Activated naive CD4-positive, alpha-beta T cell treated with anti-CD3 and anti-CD28 coated beads, Interleukin-2, amount 10 ng/mL, durations not matched to agents 7 days and 5 days (primary cell): ENCODE measurements at regions of chr22 and their contacts with region 1.

Region 1: DNA sequence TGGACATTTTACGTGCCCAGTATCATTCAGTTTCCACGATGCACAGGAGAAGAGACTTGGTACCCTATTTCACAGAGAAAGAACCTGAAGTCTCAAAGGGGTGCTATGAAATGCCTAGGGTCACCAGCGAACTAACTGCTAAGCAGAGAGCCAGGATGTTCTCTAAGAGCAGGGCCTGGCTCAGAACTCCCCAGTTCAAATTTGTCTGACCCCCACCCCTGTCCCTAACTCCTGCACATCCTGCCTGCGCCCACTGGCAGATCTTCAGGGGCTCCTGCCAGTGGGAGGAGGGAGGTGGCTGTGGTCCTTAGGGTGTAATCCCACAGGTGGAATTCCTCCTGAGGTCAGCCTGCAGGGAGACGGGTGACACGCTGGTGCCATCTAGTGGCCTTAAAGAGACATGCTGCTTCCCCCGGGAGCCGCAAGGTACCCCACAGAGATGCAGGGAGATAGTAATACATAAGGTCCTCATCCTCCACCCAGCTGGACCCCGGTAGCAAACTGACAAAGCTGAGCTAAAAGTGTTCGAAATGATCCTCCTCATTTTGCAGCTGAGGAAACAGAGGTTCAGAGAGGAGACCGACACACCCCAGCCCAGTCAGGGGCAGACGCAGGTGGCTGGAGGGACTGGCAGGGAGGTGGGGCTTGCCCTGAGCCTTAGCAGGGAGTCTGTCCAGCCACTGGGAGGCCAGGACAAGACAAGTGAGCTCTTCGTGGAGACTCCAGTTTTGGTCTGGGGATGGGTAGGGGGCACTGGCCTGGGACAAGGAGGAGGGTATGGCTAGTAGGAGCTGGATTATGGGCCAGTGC is 34.1 kb downstream of the MB start:
- DNase-seq: peak; percentile 64
- H3K4me3 Mint-ChIP-seq: no peak overlapping the region
- H3K27ac Mint-ChIP-seq: no peak overlapping the region
- H3K4me1 Mint-ChIP-seq: no peaks in the 10 kb centered on the region
- H3K27me3 Mint-ChIP-seq: peaks cover 6% of the 10 kb centered on the region

Region 2: GRCh38 chr22:35350539-35351503 is 232.2 kb before region 1 on chr22:
- CTCF ChIA-PET with region 1: interaction called, 23 read pairs
- DNase-seq: peak; percentile 93
- H3K4me3 Mint-ChIP-seq: peak overlapping the region; percentile 65
- H3K27ac Mint-ChIP-seq: peak overlapping the region; percentile 77
- H3K4me1 Mint-ChIP-seq: peaks cover 27% of the 10 kb centered on the region
- H3K27me3 Mint-ChIP-seq: peaks cover 36% of the 10 kb centered on the region

Region 3: DNA sequence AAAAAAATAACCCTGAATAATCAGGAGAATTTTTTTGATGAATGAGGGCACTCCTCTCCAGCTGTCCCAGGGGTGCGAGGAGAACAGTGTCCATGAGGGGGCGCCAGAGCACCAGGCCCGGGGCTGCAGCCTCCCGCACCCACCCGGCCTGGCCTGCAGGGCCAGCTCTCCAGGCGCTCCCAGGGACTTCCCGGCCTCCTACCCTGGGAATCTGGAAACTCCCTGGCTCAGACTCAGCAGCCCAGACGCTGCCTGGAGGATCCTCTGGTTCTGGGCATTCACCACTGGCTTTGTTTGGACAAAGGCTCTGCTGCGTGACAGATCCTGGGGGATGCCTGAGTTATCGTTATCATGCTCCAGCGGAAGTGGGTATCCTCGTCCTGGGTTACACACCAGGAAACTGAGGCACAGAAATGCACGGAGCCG is 152.2 kb before region 1 on chr22:
- CTCF ChIA-PET with region 1: interaction called, 19 read pairs
- DNase-seq: peak; percentile 76
- H3K4me3 Mint-ChIP-seq: no peak overlapping the region
- H3K27ac Mint-ChIP-seq: no peak overlapping the region
- H3K4me1 Mint-ChIP-seq: no peaks in the 10 kb centered on the region
- H3K27me3 Mint-ChIP-seq: no peaks in the 10 kb centered on the region

Region 4: GRCh38 chr22:35572556-35572955 is 10.5 kb before region 1 on chr22:
- CTCF ChIA-PET with region 1: no interaction called
- DNase-seq: no peak
- H3K4me3 Mint-ChIP-seq: no peak overlapping the region
- H3K27ac Mint-ChIP-seq: no peak overlapping the region
- H3K4me1 Mint-ChIP-seq: no peaks in the 10 kb centered on the region
- H3K27me3 Mint-ChIP-seq: peaks cover 32% of the 10 kb centered on the region